ENCODE measurements at regions of chr2 and their contacts with region 1.

Region 1: GRCh38 chr2:230798769-230799399 is 65.9 kb upstream of the ITM2C start:
- DNase-seq: peak in 1 of 2 experiments; percentile 70
- H3K4me3 ChIP-seq: no peak overlapping the region
- H3K27ac ChIP-seq: peak overlapping the region; percentile 30
- H3K4me1 ChIP-seq: peaks cover 47% of the 10 kb centered on the region
- H3K27me3 ChIP-seq: no peaks in the 10 kb centered on the region
- CTCF ChIP-seq: peak; percentile 82

Region 2: DNA sequence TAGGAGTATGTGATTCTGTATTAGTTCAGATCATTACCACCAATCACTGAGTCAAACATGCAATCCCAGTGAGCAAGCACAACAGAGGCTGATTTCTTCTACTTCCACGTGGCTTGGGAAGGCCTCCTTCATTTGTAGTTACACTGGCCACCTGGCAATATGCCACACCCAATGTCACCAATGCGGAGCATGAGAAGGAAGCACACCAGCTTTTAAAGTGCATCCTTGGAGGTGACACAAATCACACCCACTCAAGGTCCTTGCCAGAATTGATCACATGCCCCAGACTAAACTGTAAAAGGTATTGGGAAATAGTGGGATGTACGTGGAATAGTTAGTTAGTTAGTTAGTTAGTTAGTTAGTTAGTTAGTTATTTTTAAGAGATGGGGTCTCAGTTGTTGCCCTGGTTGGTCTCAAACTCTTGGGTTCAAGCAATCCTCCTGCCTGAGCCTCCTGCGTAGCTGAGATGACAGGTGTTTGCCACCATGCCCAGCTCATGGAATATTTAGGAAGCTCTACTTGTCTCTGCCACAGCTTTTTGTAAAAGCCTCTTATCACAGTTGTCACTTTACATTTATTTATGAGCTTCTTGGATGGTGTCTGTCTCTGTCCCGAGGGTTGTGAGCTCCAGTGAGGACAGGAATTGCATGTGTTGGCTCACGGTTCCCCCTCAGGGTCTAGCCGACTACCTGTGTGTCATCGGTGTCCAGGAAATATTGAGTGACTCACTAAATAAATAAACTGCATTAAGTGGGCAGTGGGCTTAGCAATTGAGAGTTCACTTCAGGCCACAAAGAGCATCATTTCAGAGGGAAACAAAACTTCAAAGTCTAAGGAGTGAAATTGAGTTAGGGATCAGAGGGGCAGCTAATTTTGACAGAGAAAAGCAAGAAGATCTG is 114.4 kb before region 1 on chr2:
- CTCF ChIA-PET with region 1: interaction called, 4 read pairs
- POLR2A ChIA-PET with region 1: interaction called, 20 read pairs
- intact Hi-C with region 1: no loop called
- DNase-seq: peak; percentile 79 to 93
- H3K4me3 ChIP-seq: no peak overlapping the region
- H3K27ac ChIP-seq: peak overlapping the region; percentile 94
- H3K4me1 ChIP-seq: peaks cover 67% of the 10 kb centered on the region
- H3K27me3 ChIP-seq: no peaks in the 10 kb centered on the region
- CTCF ChIP-seq: no peak

Region 3: GRCh38 chr2:230712443-230713330 is 86.2 kb before region 1 on chr2 and contains the start of gene CAB39:
- CTCF ChIA-PET with region 1: interaction called, 9 read pairs
- POLR2A ChIA-PET with region 1: interaction called, 6 read pairs
- intact Hi-C with region 1: loop called (anchors 1 kb)
- DNase-seq: peak; percentile 73 to 90
- H3K4me3 ChIP-seq: peak within 1 kb of the TSS; percentile 87
- H3K27ac ChIP-seq: peak within 1 kb of the TSS; percentile 84
- H3K4me1 ChIP-seq: peaks cover 42% of the 10 kb centered on the region
- H3K27me3 ChIP-seq: no peaks in the 10 kb centered on the region
- CTCF ChIP-seq: peak; percentile 64; the same call in 1 of the 2 replicates
- total RNA-seq, gene CAB39: 70.9 and 86.1 TPM in 2 replicates

Region 4: DNA sequence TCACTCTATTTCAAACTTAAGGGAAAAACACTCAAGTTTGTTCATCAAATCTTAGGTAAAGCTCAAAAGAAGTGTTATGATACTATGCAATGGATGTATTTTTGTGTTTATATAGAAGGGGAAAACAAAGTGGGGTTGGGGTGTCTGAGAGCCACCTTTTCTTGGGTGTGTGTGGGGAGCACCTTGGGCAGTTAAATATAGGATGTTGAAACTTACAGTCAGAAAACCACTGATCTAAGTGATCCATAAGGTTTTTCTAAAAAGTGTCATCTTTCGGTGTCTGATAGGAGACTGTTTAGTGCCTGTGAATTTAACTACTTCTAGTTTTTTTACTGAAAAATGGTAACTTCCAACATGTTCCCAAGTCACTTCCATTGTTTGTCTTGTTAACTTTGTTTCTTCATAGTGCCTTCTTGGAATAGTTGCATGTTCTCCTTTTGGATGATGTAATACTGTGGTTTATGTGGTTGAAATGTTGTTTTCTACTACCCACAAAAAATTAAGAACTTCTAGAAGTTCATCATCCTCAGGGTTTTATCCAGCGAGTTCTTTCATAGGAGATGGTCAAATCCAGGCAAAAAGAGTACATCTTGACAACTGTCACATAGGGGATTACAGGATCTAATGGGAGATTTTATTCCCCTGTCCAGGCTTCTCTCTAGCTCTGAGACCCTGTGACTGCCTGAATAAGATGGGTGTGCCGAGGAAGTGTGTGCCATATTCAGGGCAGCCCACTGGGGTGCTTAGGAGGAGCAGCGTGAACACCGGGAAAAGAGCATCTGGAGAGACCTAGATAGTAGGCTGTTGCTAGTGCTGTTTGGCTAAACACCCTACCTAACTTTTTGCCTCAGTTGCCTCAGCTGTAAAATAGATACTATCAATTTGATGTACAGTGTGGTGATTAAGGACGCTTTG is 40.1 kb before region 1 on chr2:
- CTCF ChIA-PET with region 1: interaction called, 4 read pairs
- POLR2A ChIA-PET with region 1: no interaction called
- intact Hi-C with region 1: loop called (anchors 5 kb)
- DNase-seq: peak in 1 of 2 experiments; percentile 61
- H3K4me3 ChIP-seq: no peak overlapping the region
- H3K27ac ChIP-seq: peak overlapping the region; percentile 52
- H3K4me1 ChIP-seq: peaks cover 30% of the 10 kb centered on the region
- H3K27me3 ChIP-seq: no peaks in the 10 kb centered on the region
- CTCF ChIP-seq: no peak

Region 5: DNA sequence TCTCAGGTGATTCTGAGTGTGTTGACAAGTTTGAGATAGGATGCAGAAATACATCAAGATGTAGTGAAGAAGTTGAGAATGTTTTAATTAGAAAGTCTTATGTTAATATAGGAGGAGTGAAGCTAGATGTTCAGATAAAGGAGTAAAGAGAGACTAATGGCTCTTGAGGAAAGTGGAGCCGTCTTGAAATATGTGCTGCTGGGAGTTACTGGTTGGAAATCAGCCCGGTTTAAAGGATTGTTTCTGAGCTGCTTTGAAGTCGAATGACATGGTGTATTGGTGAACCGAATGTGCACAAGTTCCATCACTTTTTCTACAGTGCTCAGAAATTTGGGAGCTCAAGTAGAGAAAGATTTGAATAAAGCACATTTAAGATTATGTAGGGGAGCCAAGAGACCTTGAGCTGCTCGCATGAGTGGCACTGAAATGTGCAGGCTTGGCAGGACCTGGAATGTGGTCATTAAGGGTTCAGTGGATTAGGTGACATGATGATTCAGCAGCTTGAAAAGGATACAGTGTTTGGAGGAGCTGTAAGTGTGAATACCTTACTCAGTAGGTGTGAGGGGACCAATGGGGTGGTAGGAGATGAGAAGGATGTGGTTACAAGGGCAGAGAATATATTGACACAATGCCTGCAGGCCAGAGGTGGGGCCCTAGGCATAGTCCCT is 17.6 kb before region 1 on chr2:
- CTCF ChIA-PET with region 1: interaction called, 4 read pairs
- POLR2A ChIA-PET with region 1: interaction called, 14 read pairs
- intact Hi-C with region 1: loop called (anchors 1 kb)
- DNase-seq: peak; percentile 80 to 98
- H3K4me3 ChIP-seq: peak overlapping the region; percentile 32; the same call in 1 of the 2 replicates
- H3K27ac ChIP-seq: peak overlapping the region; percentile 91
- H3K4me1 ChIP-seq: peaks cover 63% of the 10 kb centered on the region
- H3K27me3 ChIP-seq: no peaks in the 10 kb centered on the region
- CTCF ChIP-seq: no peak

Region 6: DNA sequence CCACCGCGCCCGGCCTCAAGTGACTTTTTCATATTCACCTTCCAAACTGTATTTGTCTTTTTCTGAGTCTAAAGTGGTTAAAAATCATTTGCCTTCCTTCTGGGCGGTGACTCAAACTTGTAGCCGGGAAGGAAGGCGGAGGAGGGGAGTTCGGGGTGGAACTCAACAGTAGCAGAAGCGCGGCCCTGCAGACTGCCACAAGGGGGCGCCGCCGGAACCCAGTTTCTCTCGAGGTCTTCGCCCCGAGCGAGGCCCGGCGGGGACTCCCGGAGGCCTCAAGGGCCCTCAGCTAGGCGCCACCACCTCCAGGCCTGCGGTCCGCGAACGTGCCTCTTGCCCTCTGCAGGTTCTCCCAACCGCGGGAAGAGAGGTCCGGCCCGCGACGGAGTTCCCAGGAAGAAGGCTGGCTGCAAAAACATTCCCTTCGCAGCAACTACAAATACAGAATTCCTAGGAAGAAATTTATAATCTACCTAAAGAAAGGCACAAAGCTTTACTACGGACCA is 49.1 kb after region 1 on chr2:
- CTCF ChIA-PET with region 1: no interaction called
- POLR2A ChIA-PET with region 1: no interaction called
- intact Hi-C with region 1: no loop called
- DNase-seq: peak; percentile 60 to 80
- H3K4me3 ChIP-seq: peak overlapping the region; percentile 3; the same call in 1 of the 2 replicates
- H3K27ac ChIP-seq: no peak overlapping the region
- H3K4me1 ChIP-seq: no peaks in the 10 kb centered on the region
- H3K27me3 ChIP-seq: peaks cover 13% of the 10 kb centered on the region; the same call in 1 of the 2 replicates
- CTCF ChIP-seq: peak; percentile 81

Region 7: GRCh38 chr2:231411831-231412617 is 613.1 kb after region 1 on chr2:
- CTCF ChIA-PET with region 1: no interaction called
- POLR2A ChIA-PET with region 1: no interaction called
- intact Hi-C with region 1: no loop called
- DNase-seq: peak; percentile 86 to 92
- H3K4me3 ChIP-seq: peak overlapping the region; percentile 69
- H3K27ac ChIP-seq: peak overlapping the region; percentile 68
- H3K4me1 ChIP-seq: peaks cover 23% of the 10 kb centered on the region
- H3K27me3 ChIP-seq: no peaks in the 10 kb centered on the region
- CTCF ChIP-seq: peak; percentile 83